ENCODE measurements at regions of chr2 and their contacts with region 1.

Region 1: GRCh38 chr2:2291500-2292260 is 39.4 kb downstream of the MYT1L start:
- DNase-seq: peak in 2 of 3 donors; percentile 32 to 51
- ATAC-seq: peak; percentile 74 to 85
- H3K4me3 ChIP-seq: no peak overlapping the region
- H3K27ac ChIP-seq: no peak overlapping the region
- H3K4me1 ChIP-seq: no peaks in the 10 kb centered on the region
- H3K27me3 ChIP-seq: no peaks in the 10 kb centered on the region

Region 2: DNA sequence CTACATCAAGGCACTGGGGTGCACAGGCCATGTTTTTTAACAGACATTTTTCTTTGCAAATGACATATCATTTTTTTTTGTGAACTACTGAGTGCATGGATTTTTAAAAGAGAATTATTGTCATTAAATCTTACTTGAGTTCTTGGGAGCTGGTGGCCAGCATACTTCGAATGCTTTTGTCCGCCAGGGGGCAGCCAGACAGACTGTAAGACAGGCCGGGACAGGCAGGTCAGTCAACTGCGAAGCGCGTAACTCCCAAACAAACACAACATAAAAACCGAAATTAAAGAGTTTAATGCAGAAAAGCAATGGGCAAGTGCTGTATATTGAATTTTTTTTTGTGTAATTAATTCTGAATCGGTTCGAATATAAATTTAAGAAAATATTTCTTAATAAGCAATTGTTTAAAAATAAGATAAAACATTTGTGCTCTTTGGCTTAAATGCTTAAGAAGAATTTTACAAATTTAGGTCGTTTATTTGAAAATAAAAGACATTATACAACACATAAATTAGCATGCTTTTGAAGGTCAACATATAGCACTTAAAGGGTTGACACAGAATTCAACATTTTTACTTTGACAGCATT is 405.2 kb before region 1 on chr2:
- intact Hi-C with region 1: loop called in 3 of 4 experiments (anchors 10 kb)
- DNase-seq: peak; percentile 68 to 88 (median 78)
- ATAC-seq: peak; percentile 54 to 73
- H3K4me3 ChIP-seq: no peak overlapping the region
- H3K27ac ChIP-seq: no peak overlapping the region
- H3K4me1 ChIP-seq: no peaks in the 10 kb centered on the region
- H3K27me3 ChIP-seq: no peaks in the 10 kb centered on the region

Region 3: GRCh38 chr2:1910592-1911246 is 381.0 kb before region 1 on chr2:
- intact Hi-C with region 1: loop called in 1 of 4 experiments (anchors 5 kb)
- DNase-seq: no peak
- ATAC-seq: no peak
- H3K4me3 ChIP-seq: no peak overlapping the region
- H3K27ac ChIP-seq: no peak overlapping the region
- H3K4me1 ChIP-seq: no peaks in the 10 kb centered on the region
- H3K27me3 ChIP-seq: no peaks in the 10 kb centered on the region

Region 4: GRCh38 chr2:1979138-1979537 is 312.5 kb before region 1 on chr2:
- intact Hi-C with region 1: no loop called
- DNase-seq: no peak
- ATAC-seq: no peak
- H3K4me3 ChIP-seq: no peak overlapping the region
- H3K27ac ChIP-seq: no peak overlapping the region
- H3K4me1 ChIP-seq: peaks cover under 1% of the 10 kb centered on the region
- H3K27me3 ChIP-seq: no peaks in the 10 kb centered on the region

Region 5: DNA sequence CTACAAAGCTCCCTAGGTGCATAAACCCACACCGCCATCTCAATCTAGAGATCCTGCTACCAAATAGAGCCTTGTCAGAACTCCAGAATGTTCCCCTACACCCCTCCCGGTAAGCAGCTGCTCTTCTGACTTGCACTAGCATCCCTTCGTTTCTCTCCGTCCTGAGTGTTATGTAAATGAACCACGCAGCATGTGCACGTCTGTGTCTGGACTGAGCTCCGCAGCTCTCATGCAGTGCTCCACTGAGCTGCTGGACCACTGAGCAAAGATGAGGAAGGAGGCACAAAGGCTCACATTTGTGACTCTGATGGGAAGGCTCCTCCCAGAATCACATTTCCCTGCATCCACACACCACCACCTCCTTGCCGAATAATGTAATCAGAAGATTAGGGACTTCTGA is 164.2 kb before region 1 on chr2:
- intact Hi-C with region 1: loop called in 2 of 4 experiments (anchors 10 kb)
- DNase-seq: no peak
- ATAC-seq: no peak
- H3K4me3 ChIP-seq: no peak overlapping the region
- H3K27ac ChIP-seq: no peak overlapping the region
- H3K4me1 ChIP-seq: no peaks in the 10 kb centered on the region
- H3K27me3 ChIP-seq: no peaks in the 10 kb centered on the region

Region 6: GRCh38 chr2:2362181-2362580 is 70.5 kb after region 1 on chr2:
- intact Hi-C with region 1: no loop called
- DNase-seq: no peak
- ATAC-seq: no peak
- H3K4me3 ChIP-seq: no peak overlapping the region
- H3K27ac ChIP-seq: no peak overlapping the region
- H3K4me1 ChIP-seq: no peaks in the 10 kb centered on the region
- H3K27me3 ChIP-seq: no peaks in the 10 kb centered on the region